Heart right ventricle (tissue), 16 donors: ENCODE measurements at regions of chr5 and their contacts with region 1.

Region 1: DNA sequence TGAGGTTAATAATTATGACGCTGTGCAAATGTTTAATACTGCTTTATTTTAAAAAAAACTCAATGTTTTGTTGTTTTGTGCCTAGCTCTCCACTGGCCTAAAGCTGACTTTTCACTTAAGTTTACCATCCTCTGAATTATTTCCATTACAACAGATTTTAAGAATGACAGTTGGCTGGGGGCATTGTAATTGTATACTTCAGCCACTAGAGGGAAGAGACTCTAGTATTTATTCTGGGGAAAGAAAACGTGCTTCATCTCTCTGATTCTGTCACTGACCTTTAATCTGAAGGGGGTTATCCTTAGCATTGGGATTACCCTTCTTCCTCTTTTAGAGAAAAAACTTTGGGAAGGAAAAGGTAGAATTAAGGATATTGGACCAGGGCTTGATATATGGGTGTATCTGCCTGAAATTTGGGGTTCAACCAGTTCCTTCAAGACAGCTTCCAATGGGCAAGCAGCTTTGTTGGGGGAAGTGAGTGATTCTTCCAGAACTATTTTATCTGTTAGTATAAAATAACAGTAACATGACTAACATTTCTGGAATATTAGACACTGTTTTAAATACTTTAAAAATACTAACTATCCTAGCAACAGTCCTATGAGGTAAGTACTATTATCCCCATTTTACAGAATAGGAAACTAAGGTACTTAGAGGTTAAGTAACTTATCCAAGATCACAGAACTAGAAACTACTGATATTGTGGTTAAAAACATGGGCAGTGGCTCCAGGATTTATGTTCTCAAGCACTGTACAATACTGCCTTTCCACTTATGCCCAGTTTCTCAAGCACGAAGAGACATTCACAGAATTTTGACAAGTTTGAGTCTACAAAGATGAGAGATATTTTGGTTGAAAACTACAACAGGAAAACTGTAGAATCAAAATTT is 208.4 kb downstream of the CD180 start:
- DNase-seq: no peak
- ATAC-seq: peak in 6 of 8 donors; percentile 37 to 72 (median 44)
- H3K4me3 ChIP-seq: no peak overlapping the region
- H3K27ac ChIP-seq: no peak overlapping the region
- H3K4me1 ChIP-seq: peaks cover 0 to 61% (median 38%) of the 10 kb centered on the region in 9 donors
- H3K27me3 ChIP-seq: no peaks in the 10 kb centered on the region
- CTCF ChIP-seq: peak; percentile 68 to 87 (median 81)

Region 2: DNA sequence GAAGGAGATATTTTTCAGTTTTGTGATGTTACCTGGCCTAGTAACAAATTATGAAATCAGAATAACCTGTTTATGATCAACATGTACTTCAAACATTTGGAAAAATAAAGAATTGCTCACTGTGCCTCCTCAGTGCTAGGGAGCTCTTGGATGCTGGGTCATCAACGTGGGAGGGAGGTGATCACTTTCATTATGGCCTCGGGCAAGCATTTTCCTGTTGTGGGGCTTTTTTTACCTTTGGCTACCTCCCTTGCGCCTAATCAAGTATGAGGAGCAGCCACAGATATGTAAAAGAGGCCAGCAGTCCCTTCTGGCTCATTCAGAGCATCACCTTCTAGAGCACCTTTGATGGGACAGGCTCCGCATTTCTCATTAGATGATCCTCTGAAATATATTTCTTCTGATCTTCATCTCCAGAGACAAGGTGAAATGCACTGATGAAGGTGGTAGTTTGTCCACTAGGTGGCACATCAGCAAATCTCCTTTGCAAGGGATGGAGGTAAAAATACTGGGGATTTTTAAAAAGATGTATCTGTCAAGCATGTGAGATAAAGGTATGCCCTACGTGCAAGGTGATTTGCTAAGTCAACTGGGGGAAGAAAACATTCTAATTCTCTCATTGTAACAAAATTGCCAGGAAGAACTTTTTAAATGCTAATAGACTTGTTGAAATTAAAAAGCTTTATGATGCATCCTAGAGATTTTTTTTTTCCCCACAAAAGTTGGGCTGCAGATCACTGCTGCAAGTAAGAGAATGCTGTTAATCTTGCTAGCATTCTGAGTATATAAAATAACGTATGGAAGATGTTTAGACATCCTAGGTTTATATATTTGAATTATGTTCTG is 173.8 kb before region 1 on chr5:
- intact Hi-C with region 1: loop called in 1 of 10 experiments (anchors 5 kb)
- DNase-seq: peak in 1 of 2 donors; percentile 51
- ATAC-seq: peak in 1 of 8 donors; percentile 30
- H3K4me3 ChIP-seq: no peak overlapping the region
- H3K27ac ChIP-seq: no peak overlapping the region
- H3K4me1 ChIP-seq: peaks cover 0 to 16% (median 8%) of the 10 kb centered on the region in 9 donors
- H3K27me3 ChIP-seq: no peaks in the 10 kb centered on the region
- CTCF ChIP-seq: peak; percentile 40 to 83 (median 78)

Region 3: DNA sequence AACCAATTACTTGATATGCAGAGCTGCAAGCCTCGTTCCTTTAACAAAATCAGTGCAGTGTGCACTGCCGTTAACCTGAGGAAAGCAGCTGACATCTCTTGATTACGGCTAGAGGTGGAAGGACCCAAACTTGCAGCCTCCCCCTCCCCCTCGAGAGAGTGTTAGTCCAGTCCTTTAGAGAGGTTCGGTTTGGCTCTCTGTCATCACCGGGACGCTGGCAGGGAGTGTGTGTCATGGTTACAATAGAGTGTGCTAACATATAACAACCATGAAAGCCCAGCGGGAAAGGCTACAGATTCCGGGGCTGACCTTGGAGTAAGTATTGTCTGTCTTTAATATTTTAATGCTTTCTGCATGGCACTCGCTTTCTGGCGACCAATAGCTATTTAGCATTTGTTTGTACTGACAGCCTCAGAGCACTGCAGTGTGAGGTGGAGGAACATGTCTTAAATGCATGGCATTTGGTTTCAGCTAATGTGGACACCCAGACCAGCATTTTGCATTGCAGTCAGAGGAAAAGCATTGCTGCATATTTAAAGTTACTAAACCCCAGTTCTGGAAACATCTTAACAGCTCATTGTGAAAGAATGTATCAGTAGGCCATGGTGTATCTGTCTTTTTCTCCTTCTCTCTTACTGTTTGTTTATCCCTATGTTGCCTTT is 29.1 kb before region 1 on chr5:
- intact Hi-C with region 1: loop called in 1 of 10 experiments (anchors 2 kb)
- DNase-seq: peak; percentile 39 to 49
- ATAC-seq: peak; percentile 47 to 79 (median 70)
- H3K4me3 ChIP-seq: peak overlapping the region; percentile 0 to 56 (median 47)
- H3K27ac ChIP-seq: peak overlapping the region; percentile 16 to 80 (median 64)
- H3K4me1 ChIP-seq: peaks cover 0 to 59% (median 38%) of the 10 kb centered on the region in 9 donors
- H3K27me3 ChIP-seq: no peaks in the 10 kb centered on the region
- CTCF ChIP-seq: no peak

Region 4: GRCh38 chr5:67133776-67134175 is 145.6 kb after region 1 on chr5:
- intact Hi-C with region 1: loop called in 1 of 10 experiments (anchors 10 kb)
- DNase-seq: no peak
- ATAC-seq: no peak
- H3K4me3 ChIP-seq: no peak overlapping the region
- H3K27ac ChIP-seq: no peak overlapping the region
- H3K4me1 ChIP-seq: no peaks in the 10 kb centered on the region
- H3K27me3 ChIP-seq: no peaks in the 10 kb centered on the region
- CTCF ChIP-seq: no peak

Region 5: DNA sequence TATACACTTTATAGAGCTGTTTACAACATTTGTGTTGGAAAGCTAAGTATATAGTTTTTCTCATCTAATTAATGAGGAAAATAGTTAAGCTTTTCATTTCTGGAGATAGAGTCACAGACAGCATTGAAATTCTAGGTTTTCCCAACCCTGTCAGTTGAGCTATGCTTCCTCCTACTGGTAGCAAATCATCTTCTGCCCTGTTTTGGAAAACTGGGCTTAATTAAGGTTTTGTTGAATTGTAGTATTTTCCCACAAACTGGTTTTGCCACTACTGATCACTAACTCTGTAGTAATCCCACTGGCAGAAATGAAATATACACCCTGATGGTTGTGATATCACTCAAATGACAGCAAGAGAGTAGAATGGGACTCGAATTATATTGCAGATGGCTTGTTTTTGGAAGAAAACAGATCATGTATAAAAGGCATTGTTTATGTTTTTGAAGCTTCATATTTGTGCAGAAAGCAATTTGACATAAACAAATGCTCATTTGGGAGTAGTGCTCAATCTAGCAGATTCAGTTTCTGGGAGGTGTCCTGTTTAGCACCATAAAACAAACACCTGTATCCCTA is 161.8 kb after region 1 on chr5:
- intact Hi-C with region 1: loop called in 6 of 10 experiments (anchors 5 to 10 kb)
- DNase-seq: no peak
- ATAC-seq: peak in 1 of 8 donors; percentile 71
- H3K4me3 ChIP-seq: peak overlapping the region in 7 of 10 donors; percentile 10 to 38 (median 26)
- H3K27ac ChIP-seq: peak overlapping the region in 1 of 10 donors; percentile 21
- H3K4me1 ChIP-seq: peaks cover 0 to 11% (median 6%) of the 10 kb centered on the region in 9 donors
- H3K27me3 ChIP-seq: no peaks in the 10 kb centered on the region
- CTCF ChIP-seq: peak in 8 of 9 donors; percentile 17 to 60 (median 49)

Region 6: DNA sequence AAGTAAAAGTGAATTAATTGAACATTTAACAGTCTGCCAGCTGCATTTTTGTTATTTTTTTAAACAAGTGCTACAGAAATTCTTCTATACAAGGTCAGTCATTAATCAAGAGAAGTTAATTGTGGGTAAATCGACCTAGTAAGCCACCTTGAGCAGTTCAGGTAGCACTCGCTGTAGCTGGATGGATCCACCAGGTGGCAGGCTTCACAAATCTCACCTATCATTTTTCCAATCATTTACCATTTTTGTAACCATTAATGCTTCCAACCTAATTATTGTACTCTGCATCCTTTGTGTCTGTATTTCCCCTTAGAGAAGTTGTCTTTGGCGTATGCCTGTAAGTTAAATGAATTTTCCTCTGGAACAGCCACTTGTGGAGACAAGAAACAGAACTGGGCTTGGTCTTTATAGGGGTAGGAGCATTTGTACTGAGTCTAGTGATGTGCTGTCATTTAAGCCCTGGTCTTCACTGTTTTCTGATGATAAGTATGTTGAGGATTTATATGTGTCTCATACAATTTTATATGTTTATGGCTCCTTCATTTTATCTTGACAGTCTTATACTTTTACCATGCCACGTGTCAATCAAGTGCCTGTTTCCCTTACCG is 168.9 kb after region 1 on chr5:
- intact Hi-C with region 1: loop called in 3 of 10 experiments (anchors 5 to 10 kb)
- DNase-seq: no peak
- ATAC-seq: peak in 1 of 8 donors; percentile 31
- H3K4me3 ChIP-seq: no peak overlapping the region
- H3K27ac ChIP-seq: no peak overlapping the region
- H3K4me1 ChIP-seq: peaks cover 0 to 21% (median 10%) of the 10 kb centered on the region in 9 donors
- H3K27me3 ChIP-seq: no peaks in the 10 kb centered on the region
- CTCF ChIP-seq: peak; percentile 49 to 84 (median 74)

Region 7: DNA sequence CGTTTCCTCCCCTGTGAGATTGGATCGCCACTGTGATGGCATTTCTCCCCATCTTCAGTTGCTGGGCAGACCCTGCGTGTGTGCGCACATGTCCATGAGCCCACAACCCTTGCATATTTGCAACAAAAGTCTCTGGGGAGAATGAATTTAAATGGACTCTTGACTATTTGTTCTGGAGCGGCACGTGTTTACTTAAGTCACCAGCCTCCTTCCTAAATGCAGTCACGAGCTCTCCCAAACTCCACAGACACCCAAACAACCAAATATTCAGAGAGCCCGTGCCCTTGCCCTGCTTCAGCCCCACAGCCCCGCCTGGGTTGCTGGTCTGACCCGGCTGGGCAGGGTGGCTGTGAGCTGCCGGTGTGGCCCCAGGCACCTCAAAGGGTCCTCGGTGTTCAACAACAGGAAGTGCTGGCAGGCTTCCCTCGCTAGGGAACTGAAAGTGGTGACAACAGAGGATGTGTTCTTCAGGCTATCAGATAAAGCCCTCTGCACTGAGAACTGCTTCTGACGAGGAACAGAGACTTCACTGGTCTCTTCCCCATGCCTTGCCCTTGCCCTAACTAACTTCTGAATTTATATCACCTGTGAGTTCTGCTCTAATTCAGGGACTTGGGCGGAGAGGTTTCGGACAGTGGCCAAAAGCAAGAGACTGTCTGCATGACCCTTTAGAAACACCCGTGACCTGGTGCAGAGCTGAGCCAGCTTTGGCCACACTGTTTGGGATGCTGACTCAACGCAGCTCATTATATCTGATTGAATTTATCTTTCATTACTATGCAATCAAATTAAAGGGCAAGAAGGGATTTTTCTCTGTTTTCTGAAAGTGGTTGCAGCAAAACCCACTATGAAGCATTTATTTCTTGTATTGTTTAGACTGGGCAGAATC is 227.6 kb after region 1 on chr5:
- intact Hi-C with region 1: loop called in 2 of 10 experiments (anchors 5 to 10 kb)
- DNase-seq: peak; percentile 89
- ATAC-seq: peak; percentile 85 to 96 (median 93)
- H3K4me3 ChIP-seq: peak overlapping the region in 7 of 10 donors; percentile 8 to 39 (median 32)
- H3K27ac ChIP-seq: peak overlapping the region in 9 of 10 donors; percentile 22 to 92 (median 69)
- H3K4me1 ChIP-seq: peaks cover 9 to 32% (median 23%) of the 10 kb centered on the region in 9 donors
- H3K27me3 ChIP-seq: no peaks in the 10 kb centered on the region
- CTCF ChIP-seq: no peak